Ascending aorta (tissue), 2 donors: ENCODE measurements at regions of chr4 and their contacts with region 1.

Region 1: GRCh38 chr4:38062088-38062893 is 102.1 kb downstream of the PTTG2 start:
- DNase-seq: peak in 1 of 2 donors; percentile 86
- H3K4me3 ChIP-seq: peak overlapping the region; percentile 49
- H3K27ac ChIP-seq: peak overlapping the region; percentile 55 to 63
- H3K4me1 ChIP-seq: no peaks in the 10 kb centered on the region
- H3K27me3 ChIP-seq: no peaks in the 10 kb centered on the region
- CTCF ChIP-seq: peak; percentile 40 to 83 (median 78)

Region 2: GRCh38 chr4:37908488-37909331 is 153.6 kb before region 1 on chr4:
- intact Hi-C with region 1: no loop called
- DNase-seq: no peak
- H3K4me3 ChIP-seq: peak overlapping the region; percentile 34 to 54
- H3K27ac ChIP-seq: peak overlapping the region; percentile 82 to 85
- H3K4me1 ChIP-seq: peaks cover 0 to 19% of the 10 kb centered on the region in 2 donors
- H3K27me3 ChIP-seq: no peaks in the 10 kb centered on the region
- CTCF ChIP-seq: no peak

Region 3: DNA sequence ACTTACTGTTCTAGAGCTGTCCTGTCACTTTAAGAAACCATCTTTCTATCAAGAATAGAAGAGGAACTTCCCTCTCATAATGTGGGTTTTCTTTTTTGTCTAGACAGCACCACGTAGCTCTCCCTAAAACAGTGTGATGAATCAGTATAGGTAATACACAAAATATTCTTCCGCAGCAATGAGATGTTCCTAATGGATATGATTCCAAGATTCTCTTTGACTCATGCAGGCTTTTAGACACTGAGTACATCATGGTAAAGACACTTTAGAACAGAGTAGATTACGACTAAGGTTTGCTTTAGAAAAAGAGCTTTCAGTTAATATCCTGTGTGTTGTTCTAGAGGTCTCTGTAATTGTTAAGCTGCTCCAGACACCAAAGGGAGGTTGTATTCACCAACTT is 32.3 kb before region 1 on chr4:
- intact Hi-C with region 1: no loop called
- DNase-seq: no peak
- H3K4me3 ChIP-seq: no peak overlapping the region
- H3K27ac ChIP-seq: no peak overlapping the region
- H3K4me1 ChIP-seq: no peaks in the 10 kb centered on the region
- H3K27me3 ChIP-seq: no peaks in the 10 kb centered on the region
- CTCF ChIP-seq: no peak

Region 4: DNA sequence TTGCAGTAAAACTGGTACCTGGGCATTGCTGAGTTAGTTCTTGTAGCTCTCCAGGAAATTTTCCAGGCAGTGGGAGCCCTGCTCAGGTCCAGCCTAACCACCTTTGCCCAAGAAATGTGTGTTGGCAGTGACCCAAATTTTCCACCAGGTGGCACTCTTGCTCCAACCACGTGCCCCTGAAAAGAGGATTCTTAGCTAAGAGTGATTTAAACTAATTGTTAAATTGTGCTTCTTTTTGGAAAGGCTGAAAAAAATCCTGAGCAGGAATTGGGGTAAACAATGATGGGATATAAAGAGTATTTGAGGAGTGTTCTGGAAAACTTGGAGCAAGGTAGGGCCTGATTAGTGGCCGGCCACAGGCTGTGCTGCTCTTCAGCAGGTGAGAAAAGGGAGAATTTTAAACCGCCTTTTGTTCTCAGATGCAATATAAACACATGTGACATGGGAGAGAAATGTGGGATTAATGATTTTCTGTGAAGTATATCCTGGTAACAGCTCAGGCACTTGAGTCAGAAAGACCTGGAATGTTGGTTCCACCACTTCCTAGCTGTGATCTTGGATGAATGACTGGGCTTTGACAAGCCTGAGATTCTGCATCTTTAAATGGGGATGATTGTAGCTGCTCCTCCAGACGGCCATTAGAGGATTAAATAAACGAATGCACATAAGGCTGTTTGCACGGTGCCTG is 117.5 kb after region 1 on chr4:
- intact Hi-C with region 1: loop called (anchors 5 kb)
- DNase-seq: peak in 1 of 2 donors; percentile 90
- H3K4me3 ChIP-seq: no peak overlapping the region
- H3K27ac ChIP-seq: no peak overlapping the region
- H3K4me1 ChIP-seq: peaks cover 4% of the 10 kb centered on the region in 2 donors
- H3K27me3 ChIP-seq: no peaks in the 10 kb centered on the region
- CTCF ChIP-seq: peak; percentile 88 to 94 (median 88)

Region 5: DNA sequence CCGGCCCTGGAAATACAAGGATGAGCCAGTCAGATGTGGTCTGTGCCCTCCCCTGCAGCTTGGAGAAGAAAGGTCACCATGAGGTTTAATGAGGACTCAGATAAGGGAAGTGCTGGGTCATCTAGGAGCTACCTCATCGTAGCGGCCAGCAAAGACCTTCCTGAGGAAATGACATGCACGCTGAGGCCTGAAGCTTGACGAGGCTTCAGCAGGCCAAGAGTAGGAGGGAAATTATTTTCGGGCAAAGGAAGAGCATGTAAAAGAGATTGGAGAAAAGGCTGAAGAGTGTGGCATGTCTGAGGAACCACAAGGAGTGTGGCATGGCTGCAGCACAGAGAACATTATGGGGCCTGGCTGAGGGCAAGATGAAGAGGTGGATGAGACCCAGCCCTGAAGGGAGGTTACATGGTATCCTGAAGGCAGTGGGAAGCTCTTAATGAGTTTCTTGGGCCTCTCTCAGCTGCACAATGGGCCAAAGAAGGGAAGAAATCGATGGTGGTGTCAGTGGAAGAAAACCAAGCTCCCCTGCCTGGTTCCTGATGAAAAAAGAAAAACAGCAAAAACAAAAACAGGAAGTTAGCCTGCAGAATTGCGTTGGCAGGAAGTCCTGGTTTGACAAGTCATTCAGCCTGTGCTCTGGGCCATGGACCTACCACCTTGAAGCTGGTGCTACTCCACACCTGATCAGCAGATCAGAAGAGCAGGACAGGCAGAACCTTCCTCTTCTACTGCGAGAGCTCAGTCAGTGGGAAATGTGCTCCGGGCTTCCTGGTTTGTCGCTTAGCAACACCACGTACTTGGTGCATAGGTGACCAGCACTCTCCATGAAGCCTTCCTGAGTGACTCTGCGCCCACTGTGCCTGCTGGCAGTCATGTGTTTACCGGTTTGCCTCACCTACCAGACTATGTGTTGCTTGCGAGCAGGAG is 467.2 kb after region 1 on chr4:
- intact Hi-C with region 1: loop called (anchors 10 kb)
- DNase-seq: peak; percentile 17 to 65
- H3K4me3 ChIP-seq: no peak overlapping the region
- H3K27ac ChIP-seq: no peak overlapping the region
- H3K4me1 ChIP-seq: no peaks in the 10 kb centered on the region
- H3K27me3 ChIP-seq: no peaks in the 10 kb centered on the region
- CTCF ChIP-seq: no peak

Region 6: GRCh38 chr4:38675146-38676121 is 613.1 kb after region 1 on chr4:
- intact Hi-C with region 1: loop called (anchors 5 kb)
- DNase-seq: peak in 1 of 2 donors; percentile 92
- H3K4me3 ChIP-seq: peak overlapping the region in 1 of 2 donors; percentile 51
- H3K27ac ChIP-seq: peak overlapping the region; percentile 91 to 99
- H3K4me1 ChIP-seq: peaks cover 42 to 77% of the 10 kb centered on the region in 2 donors
- H3K27me3 ChIP-seq: no peaks in the 10 kb centered on the region
- CTCF ChIP-seq: peak; percentile 79 to 96 (median 90)

Region 7: DNA sequence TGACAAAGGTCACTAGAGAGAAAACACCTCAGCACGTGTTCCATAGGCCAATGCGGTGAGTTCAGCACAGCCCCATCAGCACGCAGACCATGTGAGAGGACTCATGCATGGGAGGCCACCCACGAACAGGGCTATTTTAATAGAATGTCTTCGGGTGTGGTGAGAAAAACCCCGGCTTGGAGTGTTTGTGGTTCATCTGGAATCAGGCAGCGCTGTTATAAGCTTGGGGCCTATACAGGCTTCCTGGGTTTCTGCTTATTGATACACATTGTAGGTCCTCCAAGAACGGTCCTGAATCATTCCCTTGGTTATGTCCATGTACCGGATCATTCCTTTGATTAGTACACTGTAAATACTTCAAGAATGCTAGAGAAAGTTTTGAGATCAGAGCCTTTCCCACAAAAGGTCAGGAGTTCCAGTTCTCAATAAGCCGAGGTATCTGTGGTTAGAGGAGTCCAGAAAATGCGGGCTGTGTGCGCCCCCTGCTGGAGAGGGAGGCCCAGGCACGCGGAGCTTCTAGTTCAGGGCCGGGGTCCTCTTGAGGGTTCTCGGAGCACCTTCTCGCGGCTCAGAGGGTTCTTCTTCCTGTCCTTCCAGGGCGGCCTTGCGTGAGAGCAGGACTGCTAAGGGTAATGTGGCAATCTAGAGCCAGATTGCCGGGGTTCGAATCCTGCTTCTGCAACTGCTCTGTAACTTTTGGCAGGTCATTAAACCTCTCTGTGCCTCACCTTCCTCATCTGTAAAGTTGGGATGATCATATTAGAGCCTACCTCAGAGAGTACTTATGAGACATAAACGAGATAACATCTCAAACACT is 668.7 kb after region 1 on chr4:
- intact Hi-C with region 1: loop called (anchors 2 kb)
- DNase-seq: peak in 1 of 2 donors; percentile 83
- H3K4me3 ChIP-seq: no peak overlapping the region
- H3K27ac ChIP-seq: no peak overlapping the region
- H3K4me1 ChIP-seq: no peaks in the 10 kb centered on the region
- H3K27me3 ChIP-seq: no peaks in the 10 kb centered on the region
- CTCF ChIP-seq: peak; percentile 82 to 92 (median 89)

Region 8: GRCh38 chr4:38856524-38857337 is 794.4 kb after region 1 on chr4 and contains the start of gene TLR6:
- intact Hi-C with region 1: loop called (anchors 5 kb)
- DNase-seq: peak in 1 of 2 donors; percentile 69
- H3K4me3 ChIP-seq: peak within 1 kb of the TSS; percentile 41 to 59
- H3K27ac ChIP-seq: peak within 1 kb of the TSS; percentile 9 to 50
- H3K4me1 ChIP-seq: no peaks in the 10 kb centered on the region
- H3K27me3 ChIP-seq: no peaks in the 10 kb centered on the region
- CTCF ChIP-seq: peak; percentile 41 to 71 (median 61)
- total RNA-seq, gene TLR6: 0.11 TPM